ENCODE measurements at regions of chr6 and their contacts with region 1.

Region 1: GRCh38 chr6:159174263-159174969 is 5.2 kb downstream of the FNDC1 start:
- DNase-seq: peak; percentile 39 to 88 (median 67)
- ATAC-seq: peak; percentile 76 to 96 (median 94)
- H3K4me3 ChIP-seq: no peak overlapping the region
- H3K27ac ChIP-seq: no peak overlapping the region
- H3K4me1 ChIP-seq: no peaks in the 10 kb centered on the region
- H3K27me3 ChIP-seq: peaks cover 0 to 27% (median 2%) of the 10 kb centered on the region in 4 donors
- CTCF ChIP-seq: peak; percentile 54 to 93 (median 84)

Region 2: DNA sequence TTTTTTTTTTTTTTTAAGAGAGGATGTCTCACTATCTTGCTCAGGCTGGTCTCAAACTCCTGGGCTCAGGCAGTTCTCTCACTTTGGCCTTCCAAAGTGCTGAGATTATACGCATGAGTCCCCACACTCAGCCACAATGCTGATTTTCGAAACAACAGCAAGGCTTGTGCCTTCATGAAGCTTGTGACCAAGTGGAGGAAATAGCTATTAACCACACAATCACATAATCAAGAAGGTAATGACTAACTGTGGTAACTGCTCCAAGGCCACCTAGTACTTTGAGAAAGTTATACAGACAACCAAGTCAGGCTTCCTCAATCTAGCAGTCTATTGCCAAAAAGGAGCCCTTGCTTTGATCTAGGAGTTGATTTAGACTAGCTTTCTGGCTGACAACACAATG is 472.3 kb after region 1 on chr6:
- intact Hi-C with region 1: loop called in 2 of 3 experiments (anchors 10 kb)
- DNase-seq: no peak
- ATAC-seq: peak in 3 of 4 donors; percentile 46 to 61 (median 50)
- H3K4me3 ChIP-seq: no peak overlapping the region
- H3K27ac ChIP-seq: no peak overlapping the region
- H3K4me1 ChIP-seq: no peaks in the 10 kb centered on the region
- H3K27me3 ChIP-seq: no peaks in the 10 kb centered on the region
- CTCF ChIP-seq: no peak

Region 3: GRCh38 chr6:159654483-159655098 is 480.2 kb after region 1 on chr6:
- intact Hi-C with region 1: loop called in 2 of 3 experiments (anchors 10 kb)
- DNase-seq: no peak
- ATAC-seq: peak; percentile 54 to 70 (median 60)
- H3K4me3 ChIP-seq: no peak overlapping the region
- H3K27ac ChIP-seq: no peak overlapping the region
- H3K4me1 ChIP-seq: no peaks in the 10 kb centered on the region
- H3K27me3 ChIP-seq: no peaks in the 10 kb centered on the region
- CTCF ChIP-seq: peak; percentile 29 to 55 (median 40)

Measured in pancreas (tissue), 10 donors.